Gastrocnemius medialis (tissue), 4 donors: ENCODE measurements at regions of chr17 and their contacts with region 1.

Region 1: GRCh38 chr17:6413065-6413464 is 21.9 kb downstream of the AIPL1 start:
- DNase-seq: no peak
- ATAC-seq: no peak
- H3K4me3 ChIP-seq: no peak overlapping the region
- H3K27ac ChIP-seq: no peak overlapping the region
- H3K4me1 ChIP-seq: no peaks in the 10 kb centered on the region
- H3K27me3 ChIP-seq: peaks cover 0 to 13% (median 4%) of the 10 kb centered on the region in 3 donors
- CTCF ChIP-seq: peak in 4 of 5 experiments; percentile 19 to 40 (median 26)
- POLR2A ChIP-seq: no peak

Region 2: GRCh38 chr17:5793899-5794298 is 619.2 kb before region 1 on chr17:
- in situ Hi-C with region 1: no loop called
- intact Hi-C with region 1: loop called (anchors 5 kb)
- DNase-seq: no peak
- ATAC-seq: no peak
- H3K4me3 ChIP-seq: no peak overlapping the region
- H3K27ac ChIP-seq: no peak overlapping the region
- H3K4me1 ChIP-seq: no peaks in the 10 kb centered on the region
- H3K27me3 ChIP-seq: peaks cover 0 to 7% (median 0%) of the 10 kb centered on the region in 3 donors
- CTCF ChIP-seq: peak in 4 of 5 experiments; percentile 9 to 42 (median 18)
- POLR2A ChIP-seq: no peak